Spleen (tissue), 13 donors: ENCODE measurements at regions of chr3 and their contacts with region 1.

Region 1: GRCh38 chr3:42012935-42013690 is 51.2 kb upstream of the ULK4 start:
- DNase-seq: peak; percentile 97
- H3K4me3 ChIP-seq: peak overlapping the region; percentile 42 to 94 (median 68)
- H3K27ac ChIP-seq: peak overlapping the region; percentile 94 to 100 (median 98)
- H3K4me1 ChIP-seq: peaks cover 26 to 65% (median 44%) of the 10 kb centered on the region in 6 donors
- H3K27me3 ChIP-seq: no peaks in the 10 kb centered on the region
- CTCF ChIP-seq: peak in 3 of 11 experiments; percentile 11 to 41 (median 14)
- POLR2A ChIP-seq: peak in 2 of 3 donors; percentile 31 to 70

Region 2: GRCh38 chr3:41961750-41962679 is 51.1 kb before region 1 on chr3 and contains the start of gene ULK4:
- intact Hi-C with region 1: loop called (anchors 10 kb)
- DNase-seq: peak; percentile 99
- H3K4me3 ChIP-seq: peak within 1 kb of the TSS; percentile 92 to 99 (median 96)
- H3K27ac ChIP-seq: peak within 1 kb of the TSS; percentile 72 to 89 (median 86)
- H3K4me1 ChIP-seq: peaks cover 5 to 23% (median 15%) of the 10 kb centered on the region in 6 donors
- H3K27me3 ChIP-seq: no peaks in the 10 kb centered on the region
- CTCF ChIP-seq: peak in 3 of 11 experiments; percentile 16 to 34 (median 28)
- POLR2A ChIP-seq: peak in 1 of 3 donors; percentile 58
- total RNA-seq, gene ULK4: 10.8 to 33.3 (median 15.7) TPM

Region 3: DNA sequence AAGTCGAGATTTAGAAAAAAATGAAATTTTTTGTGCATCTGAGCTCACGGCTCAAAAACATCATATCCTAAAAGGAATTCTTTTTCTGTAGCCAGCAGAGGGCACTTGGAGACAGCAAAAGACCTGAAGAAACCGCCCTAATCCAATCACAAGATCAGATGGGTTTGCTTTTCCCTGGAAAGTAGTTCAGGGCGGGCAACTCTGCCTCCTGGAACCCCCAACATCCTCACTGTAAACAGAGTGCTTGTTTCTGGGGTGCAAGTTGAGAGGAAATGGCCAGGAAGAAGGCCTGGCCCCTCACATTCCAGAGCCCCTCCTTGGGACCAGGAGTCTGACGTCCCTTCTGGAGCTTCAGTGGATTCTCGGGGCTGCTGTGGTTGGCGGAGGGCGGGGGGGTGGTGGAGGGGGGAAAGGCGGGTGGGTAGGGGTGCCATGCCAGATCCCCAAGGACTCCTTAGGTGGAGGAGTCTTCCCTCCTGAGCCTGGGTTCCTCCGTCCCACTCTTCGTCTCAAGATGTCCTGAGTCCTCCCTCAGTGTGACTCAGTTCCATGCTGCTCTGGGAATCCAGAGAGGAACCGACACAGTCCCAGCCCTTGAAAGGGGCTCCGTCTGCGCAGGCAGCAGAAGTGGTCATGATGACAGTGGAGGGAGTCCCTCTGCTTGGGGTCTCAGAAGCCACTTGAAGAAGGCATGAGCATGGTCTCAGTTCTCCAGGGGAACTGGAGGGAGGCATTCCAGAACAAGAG is 217.0 kb after region 1 on chr3:
- intact Hi-C with region 1: no loop called
- DNase-seq: no peak
- H3K4me3 ChIP-seq: no peak overlapping the region
- H3K27ac ChIP-seq: no peak overlapping the region
- H3K4me1 ChIP-seq: no peaks in the 10 kb centered on the region
- H3K27me3 ChIP-seq: peaks cover 0 to 13% (median 0%) of the 10 kb centered on the region in 7 donors
- CTCF ChIP-seq: peak in 4 of 11 experiments; percentile 22 to 38 (median 34)
- POLR2A ChIP-seq: no peak